ENCODE measurements at regions of chr14 and their contacts with region 1.

Region 1: GRCh38 chr14:20970983-20971704 is 15.9 kb downstream of the RNASE2 start:
- DNase-seq: peak; percentile 87
- CTCF ChIP-seq: peak; percentile 97

Region 2: DNA sequence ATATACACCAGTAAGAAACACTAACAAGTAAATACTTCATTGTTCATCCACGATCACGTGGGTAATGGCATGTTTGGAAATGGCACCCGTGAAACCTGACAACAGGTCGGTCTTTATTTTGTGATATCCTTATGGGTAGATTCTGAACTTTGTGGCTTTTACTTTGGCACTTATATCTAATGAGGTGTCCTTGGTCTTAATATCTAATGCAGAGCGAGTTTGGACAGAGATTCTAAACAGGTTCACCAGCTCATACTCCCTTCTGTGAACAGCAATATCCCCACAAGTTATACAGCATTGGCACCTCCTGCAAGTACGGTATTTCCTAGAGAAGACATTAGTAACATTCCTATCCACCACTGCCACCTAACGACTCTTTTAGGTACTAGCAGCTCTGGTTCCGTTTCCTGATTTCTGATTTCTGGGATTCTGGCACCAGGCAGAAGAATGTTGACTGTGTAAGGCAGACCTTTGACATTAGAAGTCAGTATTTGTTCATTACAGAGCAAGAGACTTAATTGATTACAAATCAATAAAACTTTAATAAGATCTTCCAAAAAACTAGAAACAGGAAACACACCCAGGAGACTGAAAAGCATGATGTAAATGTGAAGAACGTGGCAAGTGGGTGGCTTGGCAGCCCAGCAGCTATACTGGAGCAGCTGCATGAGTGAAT is 280.2 kb before region 1 on chr14:
- CTCF ChIA-PET with region 1: interaction called, 18 read pairs
- POLR2A ChIA-PET with region 1: no interaction called
- DNase-seq: peak; percentile 69
- CTCF ChIP-seq: peak; percentile 76

Region 3: DNA sequence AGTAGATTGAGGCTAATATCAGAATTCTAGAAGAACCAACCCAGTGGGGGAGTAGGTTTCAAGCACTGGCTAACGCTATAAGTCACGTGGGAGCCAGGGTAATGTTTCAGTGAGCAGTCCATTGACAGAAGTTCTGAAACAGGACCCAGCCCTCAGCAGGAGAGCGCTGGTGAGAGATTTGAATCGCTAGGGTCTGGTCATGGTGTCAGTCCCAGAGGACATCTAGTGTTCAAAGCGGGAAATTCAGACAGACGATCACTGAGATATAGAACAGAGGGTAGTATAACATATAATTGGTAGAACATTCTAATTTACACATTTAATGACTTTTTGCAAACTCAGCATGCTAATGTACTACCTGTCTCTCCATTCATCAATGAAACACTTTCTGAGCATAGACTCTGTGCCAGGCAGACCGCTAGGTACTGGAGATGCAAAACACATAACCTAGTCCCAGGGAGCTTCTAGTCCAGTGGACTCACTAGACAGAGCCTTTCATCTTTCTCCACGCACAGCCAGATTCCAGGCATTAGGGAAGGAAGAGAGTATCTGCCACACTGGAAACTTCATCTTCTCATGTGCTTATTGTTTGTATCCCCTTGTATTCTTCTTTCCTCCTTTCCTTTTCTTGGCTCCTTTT is 115.4 kb before region 1 on chr14:
- CTCF ChIA-PET with region 1: interaction called, 98 read pairs
- POLR2A ChIA-PET with region 1: no interaction called
- DNase-seq: peak; percentile 67
- CTCF ChIP-seq: peak; percentile 68

Region 4: GRCh38 chr14:20989572-20990551 is 18.7 kb after region 1 on chr14 and contains the start of gene METTL17:
- CTCF ChIA-PET with region 1: interaction called, 102 read pairs
- POLR2A ChIA-PET with region 1: no interaction called
- DNase-seq: peak; percentile 91
- CTCF ChIP-seq: peak; percentile 21

Region 5: GRCh38 chr14:21071225-21072030 is 100.3 kb after region 1 on chr14:
- CTCF ChIA-PET with region 1: interaction called, 19 read pairs
- POLR2A ChIA-PET with region 1: no interaction called
- DNase-seq: peak; percentile 88
- CTCF ChIP-seq: no peak

Region 6: DNA sequence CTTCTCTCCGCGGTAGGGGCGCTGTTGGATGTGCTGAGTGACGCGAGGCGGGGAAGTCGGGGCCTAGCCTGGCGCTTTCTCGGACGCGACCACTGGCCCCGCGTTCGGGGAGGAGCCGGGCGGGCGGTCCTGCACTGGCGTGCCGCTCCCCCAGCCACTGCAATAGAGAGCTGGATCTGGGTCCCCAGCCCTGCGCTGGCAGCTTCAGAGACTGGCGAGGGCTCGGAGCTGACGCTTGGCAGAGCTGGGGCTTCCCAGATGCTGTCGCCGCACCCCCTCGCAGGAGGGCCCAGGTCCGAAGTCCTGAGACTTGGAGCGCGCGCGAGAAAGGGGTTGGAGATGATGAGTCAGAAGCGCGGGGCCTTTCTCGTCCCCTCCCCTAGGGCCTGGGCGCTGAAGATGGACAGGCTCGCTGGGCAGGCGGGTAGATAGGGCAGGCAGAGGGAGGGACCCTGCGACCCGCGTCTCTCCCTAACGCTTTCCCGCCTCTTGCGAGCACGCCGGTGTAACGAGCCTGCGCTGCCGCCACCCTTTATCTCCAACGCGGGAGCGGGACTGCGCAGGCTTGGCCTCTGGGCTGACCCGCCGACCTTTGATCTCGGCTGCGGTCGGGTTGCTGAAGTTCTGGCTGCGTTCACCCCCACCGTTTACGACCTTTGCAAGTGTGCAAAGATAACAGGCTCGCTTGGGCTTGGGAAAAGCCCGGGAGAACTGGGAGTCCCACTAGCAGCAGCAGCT is 132.7 kb after region 1 on chr14:
- CTCF ChIA-PET with region 1: interaction called, 11 read pairs
- POLR2A ChIA-PET with region 1: no interaction called
- DNase-seq: peak; percentile 94
- CTCF ChIP-seq: peak; percentile 69